OCI-LY7 (cell line): ENCODE measurements at regions of chr3 and their contacts with region 1.

Region 1: GRCh38 chr3:142279965-142280590 is 54.7 kb upstream of the GK5 start:
- DNase-seq: peak; percentile 85
- H3K4me3 ChIP-seq: no peak overlapping the region
- H3K27ac ChIP-seq: no peak overlapping the region
- H3K4me1 ChIP-seq: no peaks in the 10 kb centered on the region
- CTCF ChIP-seq: peak; percentile 84

Region 2: DNA sequence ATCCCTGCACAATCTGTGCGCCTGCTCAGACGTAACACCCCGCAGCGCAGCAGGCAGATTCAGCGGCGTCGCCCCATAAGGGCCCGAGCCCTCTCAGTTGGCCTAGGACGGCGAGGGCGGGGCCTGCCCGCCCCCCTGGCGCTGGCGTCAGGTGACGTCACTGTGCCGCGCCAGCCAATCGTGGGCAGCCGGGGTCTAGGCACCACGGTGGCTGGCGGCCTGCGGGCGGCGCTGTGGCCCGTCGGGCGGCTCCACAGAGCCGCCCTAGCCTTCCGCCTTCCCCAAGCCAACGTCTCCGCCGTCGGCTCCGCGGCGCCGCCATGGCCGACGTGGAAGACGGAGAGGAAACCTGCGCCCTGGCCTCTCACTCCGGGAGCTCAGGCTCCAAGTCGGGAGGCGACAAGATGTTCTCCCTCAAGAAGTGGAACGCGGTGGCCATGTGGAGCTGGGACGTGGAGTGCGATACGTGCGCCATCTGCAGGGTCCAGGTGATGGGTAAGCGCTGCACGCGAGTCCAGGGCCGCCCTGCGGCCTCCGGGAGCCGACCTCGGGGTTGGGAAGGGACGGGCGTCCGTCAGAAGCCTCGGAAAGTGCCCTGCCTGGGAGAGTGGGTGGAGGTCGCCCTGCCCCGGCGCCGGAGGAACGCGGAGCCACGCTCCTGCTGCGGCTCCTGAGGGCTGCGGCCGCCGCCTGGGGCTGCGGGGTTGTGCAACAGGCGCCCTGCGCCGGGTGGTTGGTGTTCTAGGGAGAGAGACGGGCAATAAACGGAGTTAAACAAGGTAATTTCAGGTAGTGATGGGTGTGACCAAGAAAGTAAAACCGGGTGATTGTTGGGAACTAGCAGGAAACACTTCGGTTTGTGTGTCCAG is 541.8 kb before region 1 on chr3 and contains the start of gene RNF7:
- CTCF ChIA-PET with region 1: no interaction called
- POLR2A ChIA-PET with region 1: no interaction called
- intact Hi-C with region 1: loop called (anchors 10 kb)
- DNase-seq: peak; percentile 98
- H3K4me3 ChIP-seq: peak within 1 kb of the TSS; percentile 96
- H3K27ac ChIP-seq: peak within 1 kb of the TSS; percentile 71
- H3K4me1 ChIP-seq: peaks cover 40% of the 10 kb centered on the region
- CTCF ChIP-seq: peak; percentile 86
- total RNA-seq, gene RNF7: 36.3 and 47.3 TPM in 2 replicates

Region 3: GRCh38 chr3:141959921-141960554 is 320.0 kb before region 1 on chr3:
- CTCF ChIA-PET with region 1: no interaction called
- POLR2A ChIA-PET with region 1: no interaction called
- intact Hi-C with region 1: loop called (anchors 1 kb)
- DNase-seq: no peak
- H3K4me3 ChIP-seq: no peak overlapping the region
- H3K27ac ChIP-seq: no peak overlapping the region
- H3K4me1 ChIP-seq: no peaks in the 10 kb centered on the region
- CTCF ChIP-seq: no peak

Region 4: DNA sequence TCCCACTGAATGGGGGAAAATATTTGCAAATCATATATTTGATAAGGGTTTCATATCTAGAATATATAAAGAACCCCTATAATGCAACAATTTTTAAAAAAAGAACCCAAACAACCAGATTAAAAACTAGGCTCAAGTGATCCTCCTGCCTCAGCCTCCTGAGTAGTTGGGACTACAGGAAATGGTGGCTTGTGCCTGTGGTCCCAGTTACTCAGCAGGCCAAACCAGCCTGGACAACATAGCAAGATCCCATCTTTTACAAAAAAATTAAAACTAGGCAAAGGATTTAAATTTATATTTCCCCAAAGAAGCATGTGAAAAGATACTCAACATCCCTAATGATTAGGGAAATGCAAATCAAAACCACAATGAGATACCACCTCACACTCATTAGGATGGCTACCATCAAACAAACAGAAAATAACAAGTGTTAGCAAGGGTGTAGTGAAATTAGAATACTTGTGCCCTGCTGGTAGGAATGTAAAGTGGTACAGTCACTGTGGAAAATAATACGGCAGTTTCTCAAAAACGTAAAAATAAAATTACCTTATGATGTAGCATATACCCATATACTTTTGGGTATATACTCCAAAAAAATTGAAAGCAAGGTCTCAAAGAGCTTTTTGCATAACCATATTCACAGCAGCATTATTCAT is 150.4 kb before region 1 on chr3:
- CTCF ChIA-PET with region 1: interaction called, 3 read pairs
- POLR2A ChIA-PET with region 1: interaction called, 5 read pairs
- intact Hi-C with region 1: loop called (anchors 2 kb)
- DNase-seq: no peak
- H3K4me3 ChIP-seq: no peak overlapping the region
- H3K27ac ChIP-seq: peak overlapping the region; percentile 29
- H3K4me1 ChIP-seq: peaks cover 32% of the 10 kb centered on the region
- CTCF ChIP-seq: no peak

Region 5: GRCh38 chr3:142596726-142597088 is 316.6 kb after region 1 on chr3:
- CTCF ChIA-PET with region 1: no interaction called
- POLR2A ChIA-PET with region 1: no interaction called
- intact Hi-C with region 1: no loop called
- DNase-seq: no peak
- H3K4me3 ChIP-seq: peak overlapping the region; percentile 83
- H3K27ac ChIP-seq: no peak overlapping the region
- H3K4me1 ChIP-seq: peaks cover 22% of the 10 kb centered on the region
- CTCF ChIP-seq: no peak